Posterior cingulate gyrus (tissue), 11 donors: ENCODE measurements at regions of chrX and their contacts with region 1.

Region 1: DNA sequence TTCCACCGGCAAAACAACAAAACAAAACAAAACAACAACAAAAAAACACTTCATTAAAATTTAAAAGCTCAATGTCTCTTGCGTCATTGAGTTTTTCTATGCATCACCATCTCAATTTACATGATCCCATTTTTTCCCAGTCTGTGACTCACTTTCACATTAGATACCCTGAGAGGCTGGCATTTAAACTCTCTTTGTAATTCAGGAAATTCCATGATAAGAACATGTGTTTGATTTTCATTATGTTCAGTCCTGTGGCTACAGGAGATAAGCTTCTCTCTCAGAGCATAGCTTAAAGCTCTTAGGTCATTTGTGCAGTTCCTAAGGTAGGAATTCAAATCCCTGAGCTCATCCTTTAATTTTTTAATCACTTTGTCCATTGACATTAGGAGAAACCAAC is 104.6 kb downstream of the NBDY start:
- DNase-seq: no peak

Region 2: DNA sequence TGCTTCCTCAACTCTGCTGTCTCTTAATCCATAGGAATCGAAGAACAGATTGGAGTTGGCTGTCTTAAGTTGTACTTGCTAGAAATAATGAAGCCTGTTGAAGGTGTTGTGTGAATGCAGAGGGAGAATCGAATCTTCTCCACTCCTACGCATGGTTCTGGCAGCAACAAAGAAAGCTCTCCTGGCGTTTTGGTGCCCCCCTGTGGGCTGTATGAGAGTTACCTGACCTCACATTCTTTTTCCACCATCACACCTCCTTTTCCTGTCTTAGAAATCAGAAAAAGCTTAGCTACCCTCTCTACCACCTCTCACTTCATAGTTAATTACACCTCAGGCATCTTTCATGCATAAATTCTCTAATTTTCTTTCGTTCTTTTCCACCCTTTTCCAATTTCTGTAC is 585.1 kb before region 1 on chrX:
- intact Hi-C with region 1: no loop called
- DNase-seq: peak in 8 of 10 donors; percentile 18 to 87 (median 36)

Region 3: DNA sequence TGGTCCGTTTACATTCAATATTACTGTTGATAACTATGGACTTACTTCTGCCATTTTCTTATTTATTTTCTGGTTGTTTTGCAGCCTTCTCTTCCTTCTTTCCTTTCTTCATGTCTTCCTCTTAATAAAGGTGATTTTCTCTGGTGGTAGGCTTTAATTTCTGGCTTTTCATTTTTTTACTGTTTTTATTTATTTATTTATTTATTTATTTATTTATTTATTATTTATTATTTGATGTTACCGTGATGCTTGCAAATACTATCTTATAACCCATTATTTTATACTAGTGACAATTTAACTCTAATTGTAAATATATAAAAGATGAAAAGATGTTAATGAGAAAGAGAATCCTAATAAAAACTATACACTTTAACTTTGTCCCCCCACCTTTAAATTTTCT is 49.0 kb after region 1 on chrX:
- intact Hi-C with region 1: no loop called
- DNase-seq: no peak

Region 4: GRCh38 chrX:57104400-57104799 is 270.8 kb after region 1 on chrX:
- intact Hi-C with region 1: loop called (anchors 10 kb)
- DNase-seq: no peak